A549 (cell line): ENCODE measurements at regions of chr14 and their contacts with region 1.

Region 1: DNA sequence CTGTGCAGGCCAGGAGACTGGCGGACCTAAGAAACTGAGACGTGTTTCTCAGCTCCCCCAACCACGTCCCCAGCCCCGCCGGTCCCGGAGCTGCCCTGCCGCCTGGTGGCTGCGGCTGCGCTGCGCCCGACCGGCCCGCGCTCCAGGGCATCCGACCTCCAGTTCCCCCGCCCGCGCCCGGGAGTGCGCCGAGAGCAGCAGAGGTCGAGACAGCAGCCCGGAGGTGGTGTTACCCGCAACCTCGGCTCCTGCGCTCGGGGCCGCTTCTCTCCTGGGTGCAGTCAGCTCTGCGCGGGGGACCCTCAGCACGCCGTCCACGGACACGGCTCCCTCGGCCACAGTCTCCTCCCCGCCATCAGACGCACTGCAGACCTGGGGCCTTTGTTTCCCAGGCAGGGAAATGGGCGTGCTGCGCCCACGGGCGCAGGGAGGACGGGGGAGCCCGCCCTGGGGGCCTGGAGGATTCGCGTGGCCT is 21.6 kb upstream of the GPR132 start:
- DNase-seq: peak; percentile 63 to 85
- ATAC-seq: peak; percentile 20 to 47
- H3K4me3 ChIP-seq: peak overlapping the region; percentile 68
- H3K27ac ChIP-seq: peak overlapping the region; percentile 98 to 100
- H3K4me1 ChIP-seq: peaks cover 52% of the 10 kb centered on the region
- CTCF ChIP-seq: peak; percentile 54
- EP300 ChIP-seq: no peak
- POLR2A ChIP-seq: peak; percentile 40
- RAD21 ChIP-seq: peak; percentile 49 to 65; a peak in 4 of 5 replicates

Region 2: DNA sequence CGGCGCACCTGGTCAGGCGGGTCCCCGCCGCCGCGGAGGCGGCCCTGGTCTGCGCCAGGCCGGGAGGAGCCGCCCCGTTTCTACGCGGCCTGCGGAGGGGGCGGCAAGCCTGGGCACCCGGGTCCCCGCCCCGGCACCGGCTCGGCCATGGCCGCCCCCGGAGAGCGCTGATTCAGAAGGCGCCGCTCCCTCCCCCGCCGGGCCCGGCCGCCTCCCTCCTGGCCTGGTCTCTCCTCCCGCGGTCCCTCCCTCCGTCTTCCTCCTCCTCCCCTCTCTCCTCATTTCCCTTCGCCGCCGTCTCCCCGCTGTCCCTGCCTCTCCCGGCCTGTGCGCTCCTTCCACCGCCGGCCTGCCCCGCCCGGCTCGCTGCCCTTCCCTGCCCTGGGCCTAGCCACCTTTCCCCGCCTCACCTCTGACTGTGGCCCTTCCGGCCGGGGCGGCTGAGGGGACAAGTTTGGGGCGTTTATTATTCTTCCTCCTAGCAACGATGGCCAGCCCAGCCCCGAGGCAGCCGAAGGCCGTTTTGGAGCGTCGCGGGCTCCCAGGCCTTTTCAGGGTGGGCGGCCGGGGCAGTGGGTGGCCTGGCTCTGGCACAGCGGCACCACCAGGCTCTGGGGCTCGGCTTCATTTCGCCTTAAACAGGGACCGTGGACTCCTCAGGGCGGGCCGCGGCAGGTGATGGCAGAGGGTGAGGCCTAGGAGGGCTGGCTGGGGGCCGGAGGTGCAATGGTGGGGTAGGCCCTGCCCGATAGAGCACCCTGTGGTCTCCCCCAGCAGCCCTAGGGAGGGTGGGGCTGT is 221.0 kb before region 1 on chr14:
- CTCF ChIA-PET with region 1: no interaction called
- POLR2A ChIA-PET with region 1: no interaction called
- DNase-seq: peak; percentile 41 to 58
- ATAC-seq: peak; percentile 61 to 78
- H3K4me3 ChIP-seq: peak overlapping the region; percentile 90
- H3K27ac ChIP-seq: peak overlapping the region; percentile 91 to 99
- H3K4me1 ChIP-seq: peaks cover 15% of the 10 kb centered on the region
- CTCF ChIP-seq: no peak
- EP300 ChIP-seq: no peak
- POLR2A ChIP-seq: peak; percentile 19; the same call in 1 of the 2 replicates
- RAD21 ChIP-seq: no peak

Region 3: GRCh38 chr14:104993808-104994591 is 92.9 kb before region 1 on chr14:
- CTCF ChIA-PET with region 1: no interaction called
- POLR2A ChIA-PET with region 1: no interaction called
- DNase-seq: no peak
- ATAC-seq: peak; percentile 33 to 37; a peak in 3 of 6 replicates
- H3K4me3 ChIP-seq: no peak overlapping the region
- H3K27ac ChIP-seq: no peak overlapping the region
- H3K4me1 ChIP-seq: no peaks in the 10 kb centered on the region
- CTCF ChIP-seq: no peak
- EP300 ChIP-seq: no peak
- POLR2A ChIP-seq: no peak
- RAD21 ChIP-seq: no peak

Region 4: GRCh38 chr14:105020815-105021655 is 65.8 kb before region 1 on chr14 and contains the start of gene CDCA4:
- CTCF ChIA-PET with region 1: interaction called, 4 read pairs
- POLR2A ChIA-PET with region 1: interaction called, 14 read pairs
- DNase-seq: peak; percentile 96 to 97
- ATAC-seq: peak; percentile 81 to 84
- H3K4me3 ChIP-seq: peak within 1 kb of the TSS; percentile 97
- H3K27ac ChIP-seq: peak within 1 kb of the TSS; percentile 97 to 98
- H3K4me1 ChIP-seq: peaks cover 75% of the 10 kb centered on the region
- CTCF ChIP-seq: no peak
- EP300 ChIP-seq: no peak
- POLR2A ChIP-seq: peak; percentile 71
- RAD21 ChIP-seq: no peak
- polyA plus RNA-seq, gene CDCA4: 19.5 and 24.2 TPM in 2 replicates

Region 5: DNA sequence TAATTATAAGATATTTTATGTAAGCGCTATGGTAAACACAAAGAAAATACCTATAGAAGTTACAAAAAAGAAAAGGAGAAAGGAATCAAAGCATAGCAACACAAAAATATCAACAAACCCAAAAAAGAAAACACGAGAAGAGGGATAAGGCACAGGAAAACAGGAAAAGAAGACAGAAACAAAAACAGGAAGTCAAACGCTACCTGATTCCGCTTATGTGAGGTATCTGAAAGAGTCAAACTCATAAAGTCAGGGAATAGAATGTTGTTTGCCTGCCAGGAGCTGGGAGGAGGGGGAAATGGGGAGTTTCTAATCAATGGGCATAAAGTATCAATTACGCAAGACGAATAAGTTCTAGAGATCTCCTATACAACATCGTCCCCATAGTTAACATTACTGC is 18.3 kb after region 1 on chr14:
- CTCF ChIA-PET with region 1: interaction called, 10 read pairs
- POLR2A ChIA-PET with region 1: no interaction called
- DNase-seq: no peak
- ATAC-seq: no peak
- H3K4me3 ChIP-seq: no peak overlapping the region
- H3K27ac ChIP-seq: no peak overlapping the region
- H3K4me1 ChIP-seq: peaks cover 3% of the 10 kb centered on the region; the same call in 2 of the 3 replicates
- CTCF ChIP-seq: no peak
- EP300 ChIP-seq: no peak
- POLR2A ChIP-seq: no peak
- RAD21 ChIP-seq: no peak

Region 6: GRCh38 chr14:105168979-105169507 is 82.2 kb after region 1 on chr14:
- CTCF ChIA-PET with region 1: interaction called, 132 read pairs
- POLR2A ChIA-PET with region 1: interaction called, 11 read pairs
- DNase-seq: peak; percentile 67 to 68
- ATAC-seq: peak; percentile 24 to 70
- H3K4me3 ChIP-seq: peak overlapping the region; percentile 59
- H3K27ac ChIP-seq: peak overlapping the region; percentile 72 to 90; a peak in 5 of 6 replicates
- H3K4me1 ChIP-seq: peaks cover 33% of the 10 kb centered on the region
- CTCF ChIP-seq: peak; percentile 52
- EP300 ChIP-seq: no peak
- POLR2A ChIP-seq: no peak
- RAD21 ChIP-seq: peak; percentile 29 to 32; a peak in 2 of 5 replicates

Region 7: DNA sequence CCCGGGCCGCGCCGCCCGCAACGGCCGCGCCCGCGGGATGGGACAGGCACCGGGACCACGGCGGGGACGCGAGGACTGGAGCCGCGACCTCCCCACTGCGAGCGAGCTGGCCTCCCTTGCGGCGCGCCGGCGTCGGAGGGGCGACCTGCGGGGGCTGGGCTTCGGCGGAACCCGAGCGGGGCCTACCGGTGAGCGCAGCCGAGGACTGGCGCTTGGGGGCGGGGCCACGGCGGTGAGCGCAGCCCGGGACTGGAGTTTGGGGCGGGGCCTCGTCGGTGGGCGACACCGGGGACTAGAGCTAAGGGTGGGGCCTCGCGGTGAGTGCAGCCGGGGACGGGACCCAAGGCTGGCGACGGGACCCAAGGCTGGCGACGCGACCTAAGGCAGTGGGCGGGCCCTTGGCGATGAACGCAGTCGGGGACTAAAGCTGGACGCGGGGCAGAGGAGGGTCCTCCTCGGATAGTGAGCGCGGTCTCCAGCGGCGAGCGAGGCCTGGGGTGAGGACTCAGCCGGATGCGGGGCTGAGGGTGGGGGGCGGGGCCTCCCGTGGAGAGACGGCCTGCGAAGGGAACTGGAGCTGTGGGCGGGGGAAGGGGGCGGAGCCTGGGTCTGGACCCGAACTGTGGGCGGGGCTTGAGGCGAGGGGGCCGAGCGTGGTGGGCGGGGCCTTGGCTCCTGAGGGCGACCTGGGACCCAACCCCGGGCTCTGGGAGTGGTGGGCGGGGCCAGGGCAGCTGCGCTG is 214.1 kb after region 1 on chr14 and contains the start of gene BRF1:
- CTCF ChIA-PET with region 1: interaction called, 3 read pairs
- POLR2A ChIA-PET with region 1: interaction called, 15 read pairs
- DNase-seq: peak; percentile 88 to 97
- ATAC-seq: peak; percentile 91 to 93
- H3K4me3 ChIP-seq: peak within 1 kb of the TSS; percentile 99
- H3K27ac ChIP-seq: peak within 1 kb of the TSS; percentile 96 to 98
- H3K4me1 ChIP-seq: 0 out of 3 replicates have a peak, but pooled peaks cover 3% of the 10 kb centered on the region
- CTCF ChIP-seq: no peak
- EP300 ChIP-seq: no peak
- POLR2A ChIP-seq: no peak; the same call in 1 of the 2 replicates
- RAD21 ChIP-seq: no peak
- polyA plus RNA-seq, gene BRF1: 7.0 and 8.5 TPM in 2 replicates